ENCODE measurements at regions of chr10 and their contacts with region 1.

Region 1: GRCh38 chr10:13776861-13777311 is 190.1 kb downstream of the PRPF18 start:
- ATAC-seq: no peak
- H3K4me3 ChIP-seq: no peak overlapping the region
- H3K27ac ChIP-seq: no peak overlapping the region
- H3K4me1 ChIP-seq: peaks cover 3 to 4% of the 10 kb centered on the region in 2 donors

Region 2: DNA sequence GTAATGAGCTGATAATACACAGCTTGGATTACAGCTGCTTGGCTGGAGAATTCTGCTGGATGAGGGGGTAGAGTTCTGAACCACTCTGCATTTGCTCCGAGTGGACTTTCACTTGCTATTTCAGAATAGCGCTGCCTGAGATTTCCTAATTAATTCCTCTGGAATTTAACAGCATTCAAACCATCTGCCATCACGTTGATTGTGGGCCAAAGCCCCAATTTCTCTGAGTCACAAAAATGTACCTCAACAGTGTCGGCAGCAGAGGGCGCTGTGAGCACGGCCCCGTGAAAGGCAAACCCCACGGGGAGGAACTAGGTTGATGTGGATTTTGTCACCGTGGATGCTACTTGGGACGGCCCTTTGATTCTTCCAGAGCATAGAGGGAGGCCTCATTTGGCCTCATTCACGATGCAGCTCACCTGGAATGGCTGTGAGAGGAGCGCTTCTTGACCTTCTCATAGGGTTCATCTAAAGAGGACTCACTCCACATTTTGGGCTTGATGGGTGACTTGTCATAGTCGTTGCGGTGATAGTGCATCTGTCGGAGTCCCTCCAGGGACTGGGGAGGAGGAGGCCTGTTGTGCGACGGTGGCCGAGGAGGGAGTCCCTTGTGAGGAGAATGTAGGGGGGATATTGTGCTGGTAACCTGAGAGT is 116.9 kb before region 1 on chr10:
- in situ Hi-C with region 1: loop called in 3 of 9 experiments (anchors 10 kb)
- ATAC-seq: peak; percentile 9 to 65 (median 54)
- H3K4me3 ChIP-seq: no peak overlapping the region
- H3K27ac ChIP-seq: no peak overlapping the region
- H3K4me1 ChIP-seq: peaks cover 0 to 3% of the 10 kb centered on the region in 2 donors

Region 3: DNA sequence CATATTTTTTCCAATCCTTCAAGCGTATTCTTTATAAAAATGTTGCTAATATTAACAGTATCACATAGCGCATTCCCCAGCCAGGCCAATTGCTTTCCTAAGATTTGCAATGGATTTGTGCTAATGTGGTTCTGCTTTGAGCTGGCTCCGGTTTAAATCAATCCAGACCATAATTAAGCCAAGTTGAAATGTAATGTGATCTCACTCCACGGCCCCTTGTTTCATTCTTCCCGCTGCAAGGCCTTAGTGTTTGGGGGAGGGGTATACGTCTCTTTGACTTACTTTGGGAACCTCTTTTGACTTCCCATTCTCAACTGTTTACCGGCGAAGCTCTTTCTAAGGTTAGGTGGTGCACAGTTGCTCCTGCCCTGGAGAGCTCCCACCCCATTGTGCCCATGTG is 103.7 kb before region 1 on chr10:
- in situ Hi-C with region 1: loop called in 2 of 9 experiments (anchors 10 kb)
- ATAC-seq: peak in 5 of 8 experiments; percentile 45 to 78 (median 74)
- H3K4me3 ChIP-seq: no peak overlapping the region
- H3K27ac ChIP-seq: no peak overlapping the region
- H3K4me1 ChIP-seq: peaks cover 15 to 21% of the 10 kb centered on the region in 2 donors

Region 4: DNA sequence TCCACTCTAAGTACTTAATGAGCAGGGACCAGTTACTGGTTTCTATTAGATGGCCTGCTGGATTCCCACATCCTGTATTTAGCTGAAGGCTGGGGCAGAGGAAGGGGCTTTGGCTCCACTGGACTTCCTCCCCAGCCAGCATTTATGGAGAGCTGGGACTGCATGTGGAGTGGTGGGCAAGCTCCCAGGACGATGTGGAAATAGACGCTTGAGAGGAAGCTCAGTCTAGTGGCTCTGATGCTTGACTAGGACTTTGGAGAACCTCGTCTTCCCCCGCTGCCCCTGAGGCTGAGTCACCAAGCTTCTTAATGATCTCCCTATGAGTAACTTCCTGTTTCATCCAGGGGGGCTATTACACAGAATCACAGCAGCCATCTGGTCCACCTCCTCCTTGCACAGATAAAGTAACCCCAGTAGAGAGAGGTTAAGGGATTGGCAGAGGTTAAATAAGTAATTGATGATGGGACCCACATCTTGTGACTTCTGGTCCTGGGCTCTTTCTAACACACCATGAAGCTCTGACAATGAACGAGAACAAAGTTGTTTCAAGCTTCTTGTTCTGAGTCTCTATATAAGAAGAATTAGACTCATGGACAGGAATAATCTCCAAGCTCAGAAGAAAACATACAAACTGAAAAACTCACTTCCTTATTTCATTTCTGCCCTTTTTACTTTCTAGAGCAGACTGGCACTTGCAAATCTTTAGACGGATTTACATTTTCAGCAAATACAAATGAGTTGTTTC is 63.9 kb before region 1 on chr10:
- in situ Hi-C with region 1: loop called in 1 of 9 experiments (anchors 10 kb)
- ATAC-seq: peak; percentile 29 to 77 (median 58)
- H3K4me3 ChIP-seq: no peak overlapping the region
- H3K27ac ChIP-seq: no peak overlapping the region
- H3K4me1 ChIP-seq: peaks cover 29 to 31% of the 10 kb centered on the region in 2 donors

Region 5: DNA sequence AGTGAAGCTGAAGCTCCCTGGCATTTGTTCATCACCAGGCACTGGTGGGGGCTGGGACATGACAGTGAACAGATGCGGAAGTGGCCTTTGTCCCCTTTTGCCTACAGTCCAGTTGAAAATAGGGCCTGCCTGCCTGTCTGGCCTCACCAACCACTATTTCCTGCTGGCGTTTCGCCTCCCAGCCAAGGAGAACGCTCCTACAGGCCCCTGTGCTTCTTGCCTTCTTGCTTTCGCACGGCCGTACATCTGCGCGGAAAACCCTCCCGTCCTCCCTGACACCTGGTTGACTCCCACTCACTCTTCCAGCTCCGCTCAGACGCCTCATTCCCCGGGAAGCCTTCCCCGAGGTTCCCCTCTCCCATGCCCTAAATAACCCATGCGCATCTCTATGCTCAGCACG is 127.2 kb after region 1 on chr10:
- in situ Hi-C with region 1: no loop called
- ATAC-seq: peak in 4 of 8 experiments; percentile 44 to 86 (median 74)
- H3K4me3 ChIP-seq: no peak overlapping the region
- H3K27ac ChIP-seq: peak overlapping the region in 1 of 2 donors; percentile 6
- H3K4me1 ChIP-seq: peaks cover 5 to 12% of the 10 kb centered on the region in 2 donors

Region 6: DNA sequence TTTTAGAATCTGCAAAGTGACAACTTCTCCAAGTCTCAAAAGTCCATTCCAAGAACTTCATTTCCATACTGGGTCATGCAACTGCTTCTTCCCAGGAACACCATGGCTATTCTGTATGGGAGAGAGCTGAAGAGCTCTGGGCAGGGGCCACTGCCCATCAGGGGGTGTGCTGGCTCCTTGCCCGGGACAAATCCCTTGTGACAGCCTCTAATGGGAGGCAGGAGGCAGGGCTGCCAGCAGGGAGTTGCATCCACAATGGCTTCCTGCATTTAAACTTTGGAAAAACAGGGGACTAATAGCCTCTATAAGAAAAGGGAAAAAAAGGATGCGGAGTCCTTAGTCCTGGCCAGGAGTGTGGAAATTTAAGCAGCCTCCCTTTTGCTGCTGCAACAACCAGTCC is 572.2 kb after region 1 on chr10:
- in situ Hi-C with region 1: no loop called
- ATAC-seq: no peak
- H3K4me3 ChIP-seq: no peak overlapping the region
- H3K27ac ChIP-seq: no peak overlapping the region
- H3K4me1 ChIP-seq: no peaks in the 10 kb centered on the region